K562 (cell line): ENCODE measurements at regions of chr6 and their contacts with region 1.

Region 1: GRCh38 chr6:75208298-75209183 is 2.7 kb upstream of the COL12A1 start:
- DNase-seq: peak; percentile 63 to 81 (median 70)
- ATAC-seq: peak; percentile 94
- H3K4me3 ChIP-seq: no peak overlapping the region
- H3K27ac ChIP-seq: no peak overlapping the region
- H3K4me1 ChIP-seq: peaks cover 0 to 10% of the 10 kb centered on the region in 2 experiments; a peak in 1 of 5 replicates
- H3K27me3 ChIP-seq: peaks cover 21 to 45% of the 10 kb centered on the region in 2 experiments; a peak in 4 of 5 replicates
- CTCF ChIP-seq: peak; percentile 82 to 91 (median 90)
- EP300 ChIP-seq: no peak
- POLR2A ChIP-seq: no peak
- RAD21 ChIP-seq: peak; percentile 88 to 92

Region 2: DNA sequence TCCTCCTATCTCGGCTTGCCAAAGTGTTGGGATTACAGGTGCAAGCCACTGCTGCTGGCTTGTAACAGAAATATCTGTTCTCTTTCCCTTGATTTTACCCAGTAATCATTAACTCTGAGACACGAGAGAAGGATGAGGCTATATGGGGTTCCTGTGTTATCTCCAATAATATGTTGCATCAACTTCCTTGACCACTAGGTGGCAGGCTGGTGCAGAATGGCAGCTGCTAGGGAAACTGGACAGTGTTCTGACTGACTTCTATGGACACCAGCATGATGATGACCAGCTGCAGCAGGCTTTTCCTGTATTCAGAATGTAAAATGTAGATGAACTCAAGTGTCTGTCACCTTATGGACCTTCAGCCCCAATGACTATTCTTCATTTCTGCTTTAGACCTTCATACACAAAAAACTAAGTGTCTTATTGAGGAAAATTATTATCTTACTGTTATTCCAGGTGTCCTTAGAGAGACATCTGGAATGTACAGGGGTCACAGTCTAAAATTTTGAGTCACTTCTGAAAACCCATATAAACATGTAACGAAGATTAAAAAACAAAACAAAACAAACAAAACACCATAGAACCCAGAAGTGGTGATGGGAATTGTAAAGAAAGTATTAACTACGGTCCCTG is 1533.0 kb before region 1 on chr6:
- CTCF ChIA-PET with region 1: no interaction called
- POLR2A ChIA-PET with region 1: no interaction called
- in situ Hi-C with region 1: no loop called
- intact Hi-C with region 1: loop called (anchors 1 kb)
- DNase-seq: peak; percentile 66 to 85 (median 76)
- ATAC-seq: peak; percentile 97
- H3K4me3 ChIP-seq: no peak overlapping the region
- H3K27ac ChIP-seq: no peak overlapping the region
- H3K4me1 ChIP-seq: no peaks in the 10 kb centered on the region
- H3K27me3 ChIP-seq: peaks cover 3 to 6% of the 10 kb centered on the region in 2 experiments; a peak in 4 of 5 replicates
- CTCF ChIP-seq: peak; percentile 84 to 90 (median 88)
- EP300 ChIP-seq: no peak
- POLR2A ChIP-seq: no peak
- RAD21 ChIP-seq: peak; percentile 75 to 85

Region 3: DNA sequence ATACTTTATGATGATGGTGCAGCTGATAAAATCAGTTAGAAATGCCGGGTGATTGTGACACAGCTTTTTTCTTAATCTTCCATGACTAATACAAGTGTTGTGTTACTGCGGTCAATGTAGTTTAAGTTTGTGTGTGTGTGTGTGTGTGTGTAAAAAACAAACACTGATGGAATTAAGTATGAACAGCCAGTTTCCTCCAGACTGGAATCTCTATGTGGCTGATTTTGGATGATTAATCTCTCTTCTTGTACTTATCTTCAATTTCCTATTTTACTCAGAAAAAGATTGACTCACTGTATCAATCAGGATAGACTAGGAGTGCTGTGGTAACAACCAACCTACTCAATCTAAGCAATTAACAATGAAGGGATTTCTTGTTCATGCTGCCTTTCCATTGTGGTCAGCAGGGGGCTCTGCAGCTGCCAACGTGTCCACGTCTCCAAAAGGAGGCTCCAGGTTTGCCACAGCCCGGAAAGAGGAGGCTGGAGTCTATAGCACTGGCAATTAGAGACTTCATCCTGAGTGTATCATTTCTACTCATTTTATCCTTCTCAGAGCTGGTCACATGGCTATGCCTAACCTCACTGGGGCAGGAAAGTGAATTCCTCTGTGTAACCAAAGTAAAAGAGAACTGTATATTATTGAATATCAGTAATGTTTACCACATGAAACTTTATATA is 1404.8 kb before region 1 on chr6:
- CTCF ChIA-PET with region 1: no interaction called
- POLR2A ChIA-PET with region 1: no interaction called
- in situ Hi-C with region 1: no loop called
- intact Hi-C with region 1: loop called (anchors 5 kb)
- DNase-seq: peak; percentile 14 to 43 (median 23)
- ATAC-seq: peak; percentile 82
- H3K4me3 ChIP-seq: no peak overlapping the region
- H3K27ac ChIP-seq: no peak overlapping the region
- H3K4me1 ChIP-seq: no peaks in the 10 kb centered on the region
- H3K27me3 ChIP-seq: no peaks in the 10 kb centered on the region
- CTCF ChIP-seq: peak; percentile 61 to 66 (median 61)
- EP300 ChIP-seq: no peak
- POLR2A ChIP-seq: no peak
- RAD21 ChIP-seq: peak in 1 of 2 experiments; percentile 46; a peak in 2 of 4 replicates

Region 4: GRCh38 chr6:73969971-73970970 is 1238.3 kb before region 1 on chr6:
- CTCF ChIA-PET with region 1: interaction called, 3 read pairs
- POLR2A ChIA-PET with region 1: no interaction called
- in situ Hi-C with region 1: no loop called
- intact Hi-C with region 1: loop called (anchors 2 kb)
- DNase-seq: peak; percentile 12 to 34 (median 16)
- ATAC-seq: peak; percentile 78
- H3K4me3 ChIP-seq: no peak overlapping the region
- H3K27ac ChIP-seq: no peak overlapping the region
- H3K4me1 ChIP-seq: no peaks in the 10 kb centered on the region
- H3K27me3 ChIP-seq: no peaks in the 10 kb centered on the region
- CTCF ChIP-seq: peak; percentile 15 to 57 (median 48); a peak in 5 of 6 replicates
- EP300 ChIP-seq: no peak
- POLR2A ChIP-seq: no peak
- RAD21 ChIP-seq: peak; percentile 38 to 58

Region 5: DNA sequence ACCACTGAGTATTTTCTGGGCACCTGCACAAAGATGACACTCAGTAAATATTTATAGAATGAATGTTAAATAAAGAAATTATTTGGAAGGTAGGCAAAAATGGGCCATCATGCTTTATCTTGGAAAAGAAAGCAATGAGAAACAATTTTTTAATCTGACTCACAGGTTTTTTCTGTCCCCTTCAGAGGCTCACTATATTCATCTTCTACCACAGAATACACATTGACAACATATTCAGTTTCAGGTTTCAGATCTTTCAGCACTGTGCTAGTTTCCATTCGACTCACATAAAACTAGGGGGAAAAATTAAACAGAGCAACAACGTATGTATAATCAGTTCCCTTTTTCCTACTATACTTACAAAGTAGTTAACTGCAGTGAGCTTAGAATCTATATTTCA is 61.0 kb before region 1 on chr6:
- CTCF ChIA-PET with region 1: no interaction called
- POLR2A ChIA-PET with region 1: no interaction called
- in situ Hi-C with region 1: no loop called
- intact Hi-C with region 1: no loop called
- DNase-seq: no peak
- ATAC-seq: no peak
- H3K4me3 ChIP-seq: no peak overlapping the region
- H3K27ac ChIP-seq: no peak overlapping the region
- H3K4me1 ChIP-seq: no peaks in the 10 kb centered on the region
- H3K27me3 ChIP-seq: no peaks in the 10 kb centered on the region
- CTCF ChIP-seq: no peak
- EP300 ChIP-seq: no peak
- POLR2A ChIP-seq: no peak
- RAD21 ChIP-seq: no peak

Region 6: GRCh38 chr6:75526502-75527127 is 318.1 kb after region 1 on chr6:
- CTCF ChIA-PET with region 1: interaction called, 3 read pairs
- POLR2A ChIA-PET with region 1: no interaction called
- in situ Hi-C with region 1: no loop called
- intact Hi-C with region 1: loop called (anchors 2 kb)
- DNase-seq: peak; percentile 28 to 71 (median 32)
- ATAC-seq: peak; percentile 94
- H3K4me3 ChIP-seq: no peak overlapping the region
- H3K27ac ChIP-seq: no peak overlapping the region
- H3K4me1 ChIP-seq: no peaks in the 10 kb centered on the region
- H3K27me3 ChIP-seq: no peaks in the 10 kb centered on the region
- CTCF ChIP-seq: peak; percentile 55 to 80 (median 64); a peak in 5 of 6 replicates
- EP300 ChIP-seq: no peak
- POLR2A ChIP-seq: no peak
- RAD21 ChIP-seq: peak; percentile 92